ENCODE measurements at regions of chr2 and their contacts with region 1.

Region 1: DNA sequence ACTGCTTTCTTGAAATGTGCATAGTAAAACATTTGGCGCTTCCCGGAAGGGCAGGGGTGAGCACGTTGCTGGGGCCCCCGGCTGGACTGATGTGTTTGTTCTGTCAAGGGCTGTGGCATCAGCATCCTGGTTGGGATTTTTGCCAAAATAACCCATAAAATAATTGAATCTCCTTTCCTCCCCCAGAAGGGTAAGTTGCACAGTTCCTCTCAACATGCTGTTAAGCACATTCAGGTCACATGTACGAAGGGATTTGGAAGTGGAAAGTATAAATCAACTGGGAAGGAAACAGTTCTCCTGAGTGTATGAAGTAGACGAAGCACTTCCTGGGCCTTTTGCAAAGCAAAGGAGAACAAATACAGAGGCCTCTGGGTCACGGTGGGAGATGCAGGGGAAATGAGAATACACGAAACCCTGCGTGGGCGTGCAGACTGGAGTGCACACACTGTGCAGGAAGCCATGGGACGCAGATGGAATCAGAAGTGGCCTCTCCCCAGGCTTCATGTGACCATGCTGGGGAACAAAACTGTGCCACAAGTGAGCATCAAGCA is 183.9 kb downstream of the LPIN1 start:
- DNase-seq: no peak
- H3K4me3 Mint-ChIP-seq: no peak overlapping the region
- H3K27ac Mint-ChIP-seq: no peak overlapping the region
- H3K4me1 Mint-ChIP-seq: peaks cover 7% of the 10 kb centered on the region
- H3K27me3 Mint-ChIP-seq: no peaks in the 10 kb centered on the region
- CTCF ChIP-seq: no peak

Region 2: DNA sequence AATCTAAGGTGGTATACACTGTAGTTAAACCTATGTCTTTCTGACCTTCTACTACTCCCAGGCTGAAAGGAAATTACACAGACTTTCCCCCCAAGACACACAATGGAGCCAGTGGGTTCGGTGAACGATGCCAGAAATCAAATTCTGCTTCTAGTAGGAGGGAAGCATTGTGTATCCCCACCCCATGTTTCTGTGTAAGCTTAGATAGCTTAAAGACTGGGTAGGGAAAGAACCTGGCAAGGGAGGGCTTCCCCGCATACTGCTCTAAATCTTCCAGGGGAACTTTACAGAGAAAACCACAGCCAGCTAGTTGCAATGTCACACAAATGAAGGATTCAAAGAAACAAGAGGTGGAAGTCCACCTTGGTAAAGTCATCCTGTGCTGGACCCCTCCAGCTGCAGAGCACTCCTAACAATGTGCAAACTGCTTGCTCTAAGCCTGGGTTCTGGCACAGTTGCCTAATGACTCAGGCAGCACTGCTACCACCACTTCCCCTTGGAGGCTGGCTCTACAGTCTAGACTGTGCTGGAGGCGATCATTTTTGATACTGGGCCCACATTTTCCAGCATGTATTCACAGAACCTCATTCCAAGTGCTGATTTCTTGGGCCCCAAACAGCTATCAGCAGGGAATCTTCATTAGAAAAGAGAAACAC is 833.9 kb after region 1 on chr2:
- CTCF ChIA-PET with region 1: no interaction called
- intact Hi-C with region 1: loop called (anchors 5 kb)
- DNase-seq: no peak
- H3K4me3 Mint-ChIP-seq: no peak overlapping the region
- H3K27ac Mint-ChIP-seq: no peak overlapping the region
- H3K4me1 Mint-ChIP-seq: no peaks in the 10 kb centered on the region
- H3K27me3 Mint-ChIP-seq: peaks cover 20% of the 10 kb centered on the region
- CTCF ChIP-seq: no peak

Measured in Calu3 (cell line).